ENCODE measurements at regions of chr17 and their contacts with region 1.

Region 1: GRCh38 chr17:41548844-41549595 is 20.9 kb upstream of the KRT19 start:
- DNase-seq: no peak
- H3K4me3 ChIP-seq: no peak overlapping the region
- H3K27me3 ChIP-seq: no peaks in the 10 kb centered on the region
- CTCF ChIP-seq: peak; percentile 86

Region 2: DNA sequence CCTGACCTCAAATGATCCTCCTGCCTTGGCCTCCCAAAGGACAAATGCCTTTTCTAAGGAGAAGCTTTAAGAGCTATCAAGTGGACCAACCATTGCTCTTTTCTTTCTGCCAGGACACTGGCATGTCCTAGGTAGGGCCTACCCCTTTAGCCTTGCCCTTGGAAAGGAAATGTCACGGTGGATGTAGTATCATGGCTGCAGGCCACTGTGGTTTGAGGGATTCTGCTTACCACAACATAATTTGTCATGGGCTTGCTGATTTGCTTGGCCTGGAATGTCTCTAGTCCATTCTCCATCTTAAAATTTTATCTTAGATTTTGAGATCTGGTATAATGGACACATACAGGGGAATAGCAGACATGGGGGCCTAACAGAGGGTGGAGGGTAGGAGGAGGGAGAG is 670.0 kb before region 1 on chr17:
- CTCF ChIA-PET with region 1: no interaction called
- POLR2A ChIA-PET with region 1: no interaction called
- DNase-seq: no peak
- H3K4me3 ChIP-seq: no peak overlapping the region
- H3K27me3 ChIP-seq: no peaks in the 10 kb centered on the region
- CTCF ChIP-seq: no peak

Region 3: DNA sequence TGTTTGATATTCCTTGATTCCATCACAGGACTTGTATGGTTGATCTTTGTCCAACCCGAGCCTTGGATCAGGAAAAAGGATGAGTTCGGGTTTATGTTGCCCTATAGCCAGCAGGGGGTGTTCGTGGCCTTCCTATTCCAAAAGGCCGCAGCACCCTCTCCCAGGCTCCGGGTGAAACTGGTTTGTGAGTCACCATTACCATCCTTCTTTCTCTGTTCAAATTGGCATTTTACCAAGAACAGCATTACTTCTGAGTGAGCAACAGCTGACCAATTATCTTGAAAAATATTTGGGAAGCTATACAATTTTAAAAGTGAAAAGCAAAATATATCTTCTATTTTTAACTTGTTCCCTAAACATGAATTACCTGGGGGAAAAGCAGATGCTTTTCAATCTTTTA is 639.7 kb before region 1 on chr17:
- CTCF ChIA-PET with region 1: interaction called, 35 read pairs
- POLR2A ChIA-PET with region 1: no interaction called
- DNase-seq: peak; percentile 83
- H3K4me3 ChIP-seq: no peak overlapping the region
- H3K27me3 ChIP-seq: no peaks in the 10 kb centered on the region
- CTCF ChIP-seq: peak; percentile 75

Region 4: DNA sequence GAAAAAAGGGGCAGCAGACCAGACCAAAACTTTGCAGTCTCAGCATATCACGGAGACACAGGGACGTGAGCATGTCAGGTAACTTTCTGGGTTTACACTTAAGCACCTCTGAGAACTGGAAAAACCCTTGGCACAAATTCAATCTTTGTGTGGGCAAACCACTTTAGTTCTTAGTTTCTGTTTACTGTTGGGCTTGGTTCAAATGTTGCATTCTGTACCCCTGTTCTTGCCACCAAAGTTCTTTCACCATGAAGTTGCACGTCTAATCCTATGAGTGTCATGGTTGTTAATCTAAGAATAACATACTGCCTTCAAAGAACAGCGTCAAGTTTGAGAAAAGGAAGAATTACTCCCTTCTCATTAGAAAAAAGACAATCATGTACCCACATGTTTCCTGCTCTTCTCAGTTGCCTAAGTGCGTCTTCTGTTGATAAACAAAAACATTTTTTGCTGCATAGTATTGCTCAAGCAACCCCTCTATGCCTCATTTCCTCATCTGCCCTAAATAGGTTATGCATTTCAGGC is 210.0 kb before region 1 on chr17:
- CTCF ChIA-PET with region 1: no interaction called
- POLR2A ChIA-PET with region 1: no interaction called
- DNase-seq: no peak
- H3K4me3 ChIP-seq: no peak overlapping the region
- H3K27me3 ChIP-seq: no peaks in the 10 kb centered on the region
- CTCF ChIP-seq: no peak

Region 5: DNA sequence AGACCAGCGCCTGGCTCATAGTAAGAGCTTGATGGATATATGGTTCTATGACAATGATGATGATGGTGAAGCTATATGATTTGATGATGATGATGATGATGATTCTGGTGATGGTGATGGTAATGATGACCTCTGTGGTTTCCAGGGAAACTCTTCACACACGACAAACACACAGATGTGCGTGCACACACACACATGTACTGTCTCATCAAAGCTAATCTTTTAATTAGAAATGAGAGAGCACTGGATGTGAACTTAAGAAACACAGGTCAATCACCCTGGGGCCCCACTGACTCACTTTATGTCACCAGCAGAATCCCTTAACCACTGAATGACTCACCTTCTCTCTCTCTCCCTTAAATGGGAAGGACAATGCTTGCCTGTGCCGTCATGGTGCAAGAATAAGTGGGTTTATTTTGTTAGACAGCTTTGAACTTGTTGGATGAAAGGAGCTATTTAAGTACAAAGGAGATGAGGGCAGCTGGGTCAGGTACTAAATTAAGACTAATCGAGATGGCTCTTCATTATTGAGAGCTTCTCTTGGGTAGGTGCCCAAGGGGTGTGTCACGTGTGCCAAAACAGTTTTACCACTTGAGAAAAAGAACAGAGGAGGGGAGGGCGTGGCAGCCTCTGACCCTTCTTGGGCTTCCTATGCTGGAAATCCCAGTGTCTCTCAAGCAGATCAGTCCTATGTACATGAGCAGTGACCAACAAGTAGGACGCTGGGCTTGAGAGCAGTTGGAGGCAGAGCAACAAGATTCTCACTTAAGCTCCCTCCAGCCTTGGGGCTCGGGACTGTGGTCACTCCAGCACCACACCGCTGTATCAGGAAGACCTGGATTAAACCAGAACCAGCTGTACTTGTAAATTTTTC is 145.0 kb before region 1 on chr17:
- CTCF ChIA-PET with region 1: interaction called, 36 read pairs
- POLR2A ChIA-PET with region 1: no interaction called
- DNase-seq: peak; percentile 94
- H3K4me3 ChIP-seq: no peak overlapping the region
- H3K27me3 ChIP-seq: no peaks in the 10 kb centered on the region
- CTCF ChIP-seq: no peak

Region 6: GRCh38 chr17:41530062-41531051 is 18.7 kb before region 1 on chr17:
- CTCF ChIA-PET with region 1: interaction called, 12 read pairs
- POLR2A ChIA-PET with region 1: no interaction called
- DNase-seq: peak; percentile 75
- H3K4me3 ChIP-seq: no peak overlapping the region
- H3K27me3 ChIP-seq: no peaks in the 10 kb centered on the region
- CTCF ChIP-seq: no peak

Region 7: DNA sequence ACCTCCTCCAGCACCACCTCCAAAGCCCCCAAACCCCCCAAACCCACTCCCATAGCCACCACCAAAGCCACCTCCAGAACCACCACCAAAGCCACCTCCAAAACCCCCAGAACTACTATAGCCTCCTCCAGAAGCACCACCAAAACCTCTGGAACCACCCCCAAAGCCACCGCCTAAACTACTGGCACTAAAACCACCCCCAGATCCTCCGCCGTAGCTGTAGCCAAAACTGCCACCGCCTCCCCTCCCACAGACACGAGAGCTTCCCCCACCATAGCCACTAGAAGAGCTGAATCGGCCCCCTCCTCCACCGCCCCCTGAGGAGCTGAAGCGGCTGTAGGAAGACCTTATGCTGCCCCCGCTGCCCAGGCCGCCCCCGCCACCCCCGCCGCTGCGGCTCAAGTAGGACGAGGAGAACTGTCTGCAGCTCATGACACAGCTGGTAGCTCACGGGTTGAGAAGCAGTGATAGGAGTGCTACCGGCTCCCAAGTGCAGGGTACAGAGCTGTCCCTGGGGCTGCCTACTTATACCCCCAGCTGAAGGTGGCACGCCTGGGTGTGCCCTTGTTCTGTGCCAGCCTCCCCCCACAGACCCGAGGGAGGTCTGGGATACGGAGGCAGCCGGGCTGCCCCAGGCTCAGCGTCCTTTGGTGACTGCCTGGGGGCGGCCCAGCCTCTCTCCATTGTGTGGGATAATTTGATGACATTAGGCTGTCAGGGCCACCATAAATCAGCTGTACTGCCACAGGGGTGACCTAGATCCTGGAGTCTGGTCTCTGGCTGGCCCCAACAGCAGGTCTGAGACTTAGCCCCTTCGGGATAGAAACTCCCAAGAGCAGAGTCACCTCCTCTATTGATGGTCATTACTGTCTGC is 22.8 kb after region 1 on chr17 and contains the start of gene KRT9:
- CTCF ChIA-PET with region 1: interaction called, 10 read pairs
- POLR2A ChIA-PET with region 1: no interaction called
- DNase-seq: no peak
- H3K4me3 ChIP-seq: no peak within 1 kb of the TSS
- H3K27me3 ChIP-seq: peaks cover 23% of the 10 kb centered on the region
- CTCF ChIP-seq: no peak
- polyA plus RNA-seq, gene KRT9: 0.04 TPM in 1 of 2 replicates, not detected in the other

Region 8: DNA sequence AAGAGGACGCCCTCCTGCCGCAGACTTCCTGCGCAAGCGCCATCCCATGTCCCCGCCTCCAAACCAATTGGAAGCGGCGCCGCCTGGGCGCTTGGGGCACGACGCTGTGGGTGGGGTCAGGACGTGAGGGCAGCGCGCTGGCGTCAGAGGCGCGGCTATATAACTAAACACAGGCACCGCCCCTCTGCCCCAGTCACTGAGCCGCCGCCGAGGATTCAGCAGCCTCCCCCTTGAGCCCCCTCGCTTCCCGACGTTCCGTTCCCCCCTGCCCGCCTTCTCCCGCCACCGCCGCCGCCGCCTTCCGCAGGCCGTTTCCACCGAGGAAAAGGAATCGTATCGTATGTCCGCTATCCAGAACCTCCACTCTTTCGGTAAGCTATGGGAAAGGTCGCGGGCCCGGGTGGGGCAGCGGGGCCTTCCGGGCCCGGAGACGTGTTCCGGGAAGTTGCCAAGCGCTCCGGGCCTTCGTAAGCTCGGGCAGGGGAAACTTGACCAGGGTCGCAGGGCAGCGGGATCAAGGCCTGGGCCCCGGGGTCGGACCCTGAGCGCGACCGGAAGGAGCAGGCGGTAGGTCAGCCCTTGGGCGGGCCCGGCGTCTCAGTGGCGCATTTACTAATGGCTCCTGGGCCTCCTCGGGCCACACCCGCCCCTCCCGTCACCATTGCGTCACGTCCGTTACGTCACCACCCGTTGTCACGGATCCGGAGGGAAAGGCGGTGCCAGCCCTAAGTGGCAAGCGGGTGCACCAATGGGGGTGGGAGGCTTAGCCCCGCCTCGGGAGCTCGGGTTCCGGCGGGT is 139.9 kb after region 1 on chr17 and contains the start of gene EIF1:
- CTCF ChIA-PET with region 1: interaction called, 10 read pairs
- POLR2A ChIA-PET with region 1: no interaction called
- DNase-seq: peak; percentile 97
- H3K4me3 ChIP-seq: peak within 1 kb of the TSS; percentile 96
- H3K27me3 ChIP-seq: peaks cover 2% of the 10 kb centered on the region; the same call in 1 of the 2 replicates
- CTCF ChIP-seq: no peak
- polyA plus RNA-seq, gene EIF1: 251 and 479 TPM in 2 replicates